Activated CD4-positive, alpha-beta T cell treated with anti-CD3 and anti-CD28 coated beads for 36 hours (primary cell): ENCODE measurements at regions of chr12 and their contacts with region 1.

Region 1: GRCh38 chr12:94126067-94126466 is 22.3 kb upstream of the PLXNC1 start:
- DNase-seq: no peak
- ATAC-seq: no peak
- H3K4me3 Mint-ChIP-seq: no peak overlapping the region
- H3K27ac Mint-ChIP-seq: no peak overlapping the region
- H3K4me1 Mint-ChIP-seq: peaks cover 39% of the 10 kb centered on the region
- H3K27me3 Mint-ChIP-seq: no peaks in the 10 kb centered on the region

Region 2: GRCh38 chr12:92722897-92723296 is 1403.2 kb before region 1 on chr12:
- CTCF ChIA-PET with region 1: no interaction called
- POLR2A ChIA-PET with region 1: interaction called, 11 read pairs
- intact Hi-C with region 1: no loop called
- DNase-seq: no peak
- ATAC-seq: no peak
- H3K4me3 Mint-ChIP-seq: no peak overlapping the region
- H3K27ac Mint-ChIP-seq: no peak overlapping the region
- H3K4me1 Mint-ChIP-seq: no peaks in the 10 kb centered on the region
- H3K27me3 Mint-ChIP-seq: peaks cover 6% of the 10 kb centered on the region

Region 3: DNA sequence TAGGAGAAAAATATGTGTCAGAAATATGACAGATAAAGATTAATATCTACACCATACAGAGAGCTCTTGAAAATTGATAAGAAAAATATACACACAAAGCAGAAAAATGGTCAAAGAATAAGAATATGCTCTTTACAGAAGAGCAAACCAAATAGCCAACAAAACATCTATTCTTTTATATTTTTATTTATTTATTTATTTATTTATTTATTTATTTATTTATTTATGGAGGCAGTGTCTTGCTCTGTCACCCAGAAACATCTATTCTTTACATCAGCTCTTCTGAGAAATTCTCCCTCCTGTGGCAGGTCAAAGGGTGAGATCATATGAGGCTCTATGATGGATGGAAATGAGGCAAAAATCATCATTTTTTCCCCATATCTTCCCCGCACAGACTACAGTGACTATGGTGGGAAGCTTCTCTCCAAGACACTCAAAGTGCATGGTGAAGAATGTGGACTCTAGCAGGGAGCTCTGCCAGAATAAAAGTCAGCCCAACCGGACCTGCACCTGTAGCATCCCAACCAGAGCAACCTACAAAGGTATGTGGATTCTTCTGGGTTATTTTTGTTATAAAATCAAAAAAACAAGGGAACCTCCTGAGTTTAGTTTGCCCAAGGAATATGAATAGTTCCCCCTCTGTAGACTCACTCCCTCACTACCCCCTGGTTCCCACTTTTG is 93.7 kb after region 1 on chr12:
- CTCF ChIA-PET with region 1: no interaction called
- POLR2A ChIA-PET with region 1: interaction called, 10 read pairs
- intact Hi-C with region 1: no loop called
- DNase-seq: no peak
- ATAC-seq: no peak
- H3K4me3 Mint-ChIP-seq: no peak overlapping the region
- H3K27ac Mint-ChIP-seq: no peak overlapping the region
- H3K4me1 Mint-ChIP-seq: no peaks in the 10 kb centered on the region
- H3K27me3 Mint-ChIP-seq: no peaks in the 10 kb centered on the region